Caco-2 (cell line): ENCODE measurements at regions of chr1 and their contacts with region 1.

Region 1: GRCh38 chr1:113242481-113242880 is 147.8 kb upstream of the MAGI3 start:
- DNase-seq: peak; percentile 7 to 43
- H3K4me3 ChIP-seq: no peak overlapping the region
- H3K4me3 Mint-ChIP-seq: no peak overlapping the region
- H3K27ac Mint-ChIP-seq: no peak overlapping the region
- H3K4me1 ChIP-seq: peaks cover 26% of the 10 kb centered on the region
- H3K4me1 Mint-ChIP-seq: peaks cover 23% of the 10 kb centered on the region
- H3K27me3 ChIP-seq: no peaks in the 10 kb centered on the region
- H3K27me3 Mint-ChIP-seq: no peaks in the 10 kb centered on the region
- CTCF ChIP-seq: no peak

Region 2: DNA sequence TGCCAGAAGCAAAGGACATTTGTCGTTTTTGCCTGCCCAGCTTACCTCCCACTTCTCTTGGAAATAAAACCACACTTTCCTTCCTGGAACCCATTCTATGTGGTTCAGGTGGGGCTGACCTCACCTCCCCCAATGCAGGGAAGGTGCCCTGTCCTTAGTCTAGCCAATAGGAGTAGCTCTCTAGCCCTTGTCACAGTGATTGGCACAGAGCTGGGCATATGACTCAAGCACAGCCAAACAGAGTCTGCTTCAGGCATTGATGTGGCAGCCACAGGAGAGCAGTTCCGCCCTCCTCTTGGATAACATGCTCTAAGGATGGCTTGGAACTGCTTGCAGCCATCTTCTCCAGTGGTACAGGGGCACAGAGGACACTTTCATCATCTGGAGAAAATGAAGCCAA is 35.5 kb before region 1 on chr1:
- CTCF ChIA-PET with region 1: no interaction called
- POLR2A ChIA-PET with region 1: no interaction called
- intact Hi-C with region 1: loop called (anchors 5 kb)
- DNase-seq: peak; percentile 30 to 56
- H3K4me3 ChIP-seq: no peak overlapping the region
- H3K4me3 Mint-ChIP-seq: peak overlapping the region; percentile 49
- H3K27ac Mint-ChIP-seq: peak overlapping the region; percentile 84
- H3K4me1 ChIP-seq: peaks cover 56% of the 10 kb centered on the region
- H3K4me1 Mint-ChIP-seq: peaks cover 45% of the 10 kb centered on the region
- H3K27me3 ChIP-seq: no peaks in the 10 kb centered on the region
- H3K27me3 Mint-ChIP-seq: no peaks in the 10 kb centered on the region
- CTCF ChIP-seq: no peak

Region 3: GRCh38 chr1:113307771-113308445 is 65.4 kb after region 1 on chr1:
- CTCF ChIA-PET with region 1: no interaction called
- POLR2A ChIA-PET with region 1: no interaction called
- intact Hi-C with region 1: loop called (anchors 2 kb)
- DNase-seq: peak in 1 of 2 experiments; percentile 57
- H3K4me3 ChIP-seq: no peak overlapping the region
- H3K4me3 Mint-ChIP-seq: peak overlapping the region; percentile 59
- H3K27ac Mint-ChIP-seq: peak overlapping the region; percentile 84
- H3K4me1 ChIP-seq: peaks cover 23% of the 10 kb centered on the region
- H3K4me1 Mint-ChIP-seq: peaks cover 40% of the 10 kb centered on the region
- H3K27me3 ChIP-seq: no peaks in the 10 kb centered on the region
- H3K27me3 Mint-ChIP-seq: no peaks in the 10 kb centered on the region
- CTCF ChIP-seq: no peak

Region 4: GRCh38 chr1:113429443-113430153 is 187.1 kb after region 1 on chr1:
- CTCF ChIA-PET with region 1: no interaction called
- POLR2A ChIA-PET with region 1: no interaction called
- intact Hi-C with region 1: no loop called
- DNase-seq: no peak
- H3K4me3 ChIP-seq: no peak overlapping the region
- H3K4me3 Mint-ChIP-seq: no peak overlapping the region
- H3K27ac Mint-ChIP-seq: no peak overlapping the region
- H3K4me1 ChIP-seq: peaks cover 10% of the 10 kb centered on the region
- H3K4me1 Mint-ChIP-seq: peaks cover 5% of the 10 kb centered on the region
- H3K27me3 ChIP-seq: no peaks in the 10 kb centered on the region
- H3K27me3 Mint-ChIP-seq: no peaks in the 10 kb centered on the region
- CTCF ChIP-seq: no peak